Activated CD8-positive, alpha-beta T cell treated with anti-CD3 and anti-CD28 coated beads for 36 hours (primary cell): ENCODE measurements at regions of chr1 and their contacts with region 1.

Region 1: DNA sequence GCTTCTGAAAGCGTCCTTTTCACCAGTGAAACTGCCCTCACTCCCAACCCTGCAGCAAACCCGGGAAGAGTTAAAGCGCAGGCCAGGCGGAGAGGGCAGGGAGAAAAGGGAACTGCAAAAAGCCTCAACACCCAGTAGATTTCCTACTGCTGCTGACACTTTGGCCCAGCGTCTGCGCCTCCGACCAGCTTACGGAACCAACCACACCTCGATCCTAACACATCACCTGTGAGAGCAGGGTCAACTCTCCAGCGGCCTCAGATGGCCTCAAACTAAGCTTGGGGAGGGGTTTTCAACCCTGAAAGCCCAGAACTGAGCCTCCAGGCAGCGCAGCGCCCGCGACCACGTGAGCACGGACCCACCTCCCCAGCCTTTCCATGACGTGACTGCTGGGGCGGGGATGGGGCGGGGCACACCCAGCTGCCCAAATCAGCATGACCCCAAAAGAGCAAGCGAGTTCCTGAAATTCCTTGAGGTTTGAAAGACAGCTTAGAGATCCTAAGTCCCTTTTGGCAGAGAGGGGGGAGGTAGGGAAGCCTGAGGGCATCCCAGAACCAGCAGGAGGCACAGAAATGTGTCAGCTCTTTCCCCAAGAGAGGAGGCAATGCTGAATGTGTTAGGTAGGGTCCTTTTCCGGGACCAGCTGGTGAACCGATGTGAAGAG is 59.1 kb downstream of the ITPKB start:
- DNase-seq: peak; percentile 89
- ATAC-seq: peak; percentile 18
- H3K4me3 Mint-ChIP-seq: peak overlapping the region; percentile 68
- H3K27ac Mint-ChIP-seq: peak overlapping the region; percentile 94
- H3K4me1 Mint-ChIP-seq: peaks cover 98% of the 10 kb centered on the region
- H3K27me3 Mint-ChIP-seq: no peaks in the 10 kb centered on the region
- CTCF ChIP-seq: no peak

Region 2: DNA sequence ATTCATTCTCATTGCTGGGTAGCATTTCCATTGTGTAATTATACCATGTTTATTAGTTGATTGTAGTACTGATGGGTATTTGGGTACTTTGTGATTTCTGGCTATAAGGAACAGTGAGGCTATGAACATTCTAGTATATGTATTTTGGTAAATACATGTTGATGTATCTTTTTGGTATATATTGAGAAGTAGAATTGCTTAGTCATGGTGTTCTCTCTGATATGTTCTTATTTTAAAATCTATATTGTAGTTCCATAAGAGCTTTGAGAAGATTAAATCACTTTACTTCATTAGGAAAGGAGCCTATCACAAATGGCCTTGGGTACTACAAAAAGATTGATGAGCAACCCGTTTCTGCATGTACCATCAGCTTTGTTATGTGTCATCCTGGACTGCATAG is 443.2 kb before region 1 on chr1:
- CTCF ChIA-PET with region 1: no interaction called
- POLR2A ChIA-PET with region 1: no interaction called
- intact Hi-C with region 1: no loop called
- DNase-seq: no peak
- ATAC-seq: no peak
- H3K4me3 Mint-ChIP-seq: no peak overlapping the region
- H3K27ac Mint-ChIP-seq: no peak overlapping the region
- H3K4me1 Mint-ChIP-seq: no peaks in the 10 kb centered on the region
- H3K27me3 Mint-ChIP-seq: no peaks in the 10 kb centered on the region
- CTCF ChIP-seq: no peak

Region 3: GRCh38 chr1:226626577-226626956 is 53.4 kb before region 1 on chr1:
- CTCF ChIA-PET with region 1: interaction called, 133 read pairs
- POLR2A ChIA-PET with region 1: interaction called, 3 read pairs
- intact Hi-C with region 1: no loop called
- DNase-seq: peak; percentile 89
- ATAC-seq: peak; percentile 90
- H3K4me3 Mint-ChIP-seq: peak overlapping the region; percentile 43
- H3K27ac Mint-ChIP-seq: peak overlapping the region; percentile 87
- H3K4me1 Mint-ChIP-seq: peaks cover 28% of the 10 kb centered on the region
- H3K27me3 Mint-ChIP-seq: no peaks in the 10 kb centered on the region
- CTCF ChIP-seq: peak; percentile 99

Region 4: GRCh38 chr1:226656601-226657277 is 23.2 kb before region 1 on chr1:
- CTCF ChIA-PET with region 1: interaction called, 8 read pairs
- POLR2A ChIA-PET with region 1: interaction called, 56 read pairs
- intact Hi-C with region 1: loop called (anchors 5 kb)
- DNase-seq: peak; percentile 42
- ATAC-seq: peak; percentile 6
- H3K4me3 Mint-ChIP-seq: peak overlapping the region; percentile 24
- H3K27ac Mint-ChIP-seq: no peak overlapping the region
- H3K4me1 Mint-ChIP-seq: peaks cover 65% of the 10 kb centered on the region
- H3K27me3 Mint-ChIP-seq: no peaks in the 10 kb centered on the region
- CTCF ChIP-seq: no peak

Region 5: GRCh38 chr1:226668173-226668560 is 11.8 kb before region 1 on chr1:
- CTCF ChIA-PET with region 1: interaction called, 6 read pairs
- POLR2A ChIA-PET with region 1: interaction called, 56 read pairs
- intact Hi-C with region 1: loop called (anchors 1 kb)
- DNase-seq: no peak
- ATAC-seq: no peak
- H3K4me3 Mint-ChIP-seq: no peak overlapping the region
- H3K27ac Mint-ChIP-seq: peak overlapping the region; percentile 57
- H3K4me1 Mint-ChIP-seq: peaks cover 92% of the 10 kb centered on the region
- H3K27me3 Mint-ChIP-seq: no peaks in the 10 kb centered on the region
- CTCF ChIP-seq: no peak

Region 6: GRCh38 chr1:226702957-226703831 is 23.2 kb after region 1 on chr1:
- CTCF ChIA-PET with region 1: interaction called, 42 read pairs
- POLR2A ChIA-PET with region 1: interaction called, 11 read pairs
- intact Hi-C with region 1: no loop called
- DNase-seq: peak; percentile 84
- ATAC-seq: peak; percentile 76
- H3K4me3 Mint-ChIP-seq: peak overlapping the region; percentile 83
- H3K27ac Mint-ChIP-seq: peak overlapping the region; percentile 97
- H3K4me1 Mint-ChIP-seq: peaks cover 79% of the 10 kb centered on the region
- H3K27me3 Mint-ChIP-seq: no peaks in the 10 kb centered on the region
- CTCF ChIP-seq: no peak